Right cardiac atrium (tissue), 5 donors: ENCODE measurements at regions of chr11 and their contacts with region 1.

Region 1: DNA sequence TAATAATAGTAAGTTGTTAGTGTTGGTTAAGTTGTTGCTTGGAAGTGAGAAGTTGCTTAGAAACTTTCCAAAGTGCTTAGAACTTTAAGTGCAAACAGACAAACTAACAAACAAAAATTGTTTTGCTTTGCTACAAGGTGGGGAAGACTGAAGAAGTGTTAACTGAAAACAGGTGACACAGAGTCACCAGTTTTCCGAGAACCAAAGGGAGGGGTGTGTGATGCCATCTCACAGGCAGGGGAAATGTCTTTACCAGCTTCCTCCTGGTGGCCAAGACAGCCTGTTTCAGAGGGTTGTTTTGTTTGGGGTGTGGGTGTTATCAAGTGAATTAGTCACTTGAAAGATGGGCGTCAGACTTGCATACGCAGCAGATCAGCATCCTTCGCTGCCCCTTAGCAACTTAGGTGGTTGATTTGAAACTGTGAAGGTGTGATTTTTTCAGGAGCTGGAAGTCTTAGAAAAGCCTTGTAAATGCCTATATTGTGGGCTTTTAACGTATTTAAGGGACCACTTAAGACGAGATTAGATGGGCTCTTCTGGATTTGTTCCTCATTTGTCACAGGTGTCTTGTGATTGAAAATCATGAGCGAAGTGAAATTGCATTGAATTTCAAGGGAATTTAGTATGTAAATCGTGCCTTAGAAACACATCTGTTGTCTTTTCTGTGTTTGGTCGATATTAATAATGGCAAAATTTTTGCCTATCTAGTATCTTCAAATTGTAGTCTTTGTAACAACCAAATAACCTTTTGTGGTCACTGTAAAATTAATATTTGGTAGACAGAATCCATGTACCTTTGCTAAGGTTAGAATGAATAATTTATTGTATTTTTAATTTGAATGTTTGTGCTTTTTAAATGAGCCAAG is 2.7 kb downstream of the NEAT1 start:
- DNase-seq: peak in 2 of 3 donors; percentile 19 to 44
- ATAC-seq: no peak
- H3K4me3 ChIP-seq: peak overlapping the region; percentile 83
- H3K27ac ChIP-seq: peak overlapping the region; percentile 98
- H3K4me1 ChIP-seq: peaks cover 8% of the 10 kb centered on the region
- H3K27me3 ChIP-seq: no peaks in the 10 kb centered on the region

Region 2: DNA sequence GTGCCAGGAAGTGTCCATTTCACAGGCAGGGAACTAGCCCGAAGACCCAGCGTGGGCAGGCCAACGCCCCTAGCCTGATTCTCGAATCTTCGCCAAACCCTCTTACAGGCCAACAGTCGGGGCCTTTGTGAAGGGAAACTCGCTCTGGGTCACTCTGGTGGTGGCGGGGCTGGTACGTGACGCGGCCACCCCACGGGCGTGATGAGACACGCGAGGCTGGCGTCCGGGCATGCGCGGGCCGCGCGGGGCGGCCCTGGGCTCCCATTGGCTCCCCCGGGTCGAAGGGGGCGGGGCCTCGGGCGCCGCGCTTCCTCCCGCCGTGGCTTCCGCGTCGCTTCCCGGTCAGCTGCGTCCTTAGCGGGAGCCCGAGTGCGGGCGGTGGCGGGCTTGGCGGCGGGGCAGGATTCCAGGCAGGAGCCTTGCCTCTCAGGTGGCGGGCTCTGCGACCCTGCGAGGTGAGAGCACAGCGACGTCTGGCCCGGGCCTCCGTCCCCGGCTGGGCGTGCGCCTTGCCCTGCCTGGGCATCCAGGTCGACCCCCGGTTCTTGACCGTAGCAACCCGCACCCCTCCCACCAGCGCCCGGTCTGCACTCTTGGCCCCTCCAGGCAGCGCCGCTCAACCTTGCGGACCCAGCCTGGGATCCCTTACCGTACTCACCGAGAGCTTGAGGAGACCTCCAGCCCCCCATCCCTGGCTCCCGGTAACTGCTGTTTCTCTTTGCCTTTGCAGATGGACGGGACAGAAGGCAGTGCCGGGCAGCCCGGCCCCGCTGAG is 38.8 kb before region 1 on chr11 and contains the start of gene FRMD8:
- intact Hi-C with region 1: no loop called
- DNase-seq: peak; percentile 95 to 98 (median 98)
- ATAC-seq: peak; percentile 76 to 80
- H3K4me3 ChIP-seq: peak within 1 kb of the TSS; percentile 71
- H3K27ac ChIP-seq: peak within 1 kb of the TSS; percentile 83
- H3K4me1 ChIP-seq: peaks cover 15% of the 10 kb centered on the region
- H3K27me3 ChIP-seq: no peaks in the 10 kb centered on the region
- total RNA-seq, gene FRMD8: 12.2 to 16.1 (median 12.9) TPM

Region 3: GRCh38 chr11:65471410-65471762 is 46.0 kb after region 1 on chr11:
- intact Hi-C with region 1: loop called in 1 of 4 experiments (anchors 5 kb)
- DNase-seq: peak; percentile 77 to 89 (median 86)
- ATAC-seq: peak; percentile 85 to 88
- H3K4me3 ChIP-seq: no peak overlapping the region
- H3K27ac ChIP-seq: peak overlapping the region; percentile 100
- H3K4me1 ChIP-seq: peaks cover 11% of the 10 kb centered on the region
- H3K27me3 ChIP-seq: no peaks in the 10 kb centered on the region

Region 4: GRCh38 chr11:65497141-65498041 is 72.1 kb after region 1 on chr11:
- intact Hi-C with region 1: loop called in 3 of 4 experiments (anchors 2 to 5 kb)
- DNase-seq: peak; percentile 99 to 100 (median 100)
- ATAC-seq: peak; percentile 91 to 94
- H3K4me3 ChIP-seq: peak overlapping the region; percentile 95
- H3K27ac ChIP-seq: peak overlapping the region; percentile 100
- H3K4me1 ChIP-seq: peaks cover 10% of the 10 kb centered on the region
- H3K27me3 ChIP-seq: no peaks in the 10 kb centered on the region